ENCODE measurements at regions of chr4 and their contacts with region 1.

Region 1: DNA sequence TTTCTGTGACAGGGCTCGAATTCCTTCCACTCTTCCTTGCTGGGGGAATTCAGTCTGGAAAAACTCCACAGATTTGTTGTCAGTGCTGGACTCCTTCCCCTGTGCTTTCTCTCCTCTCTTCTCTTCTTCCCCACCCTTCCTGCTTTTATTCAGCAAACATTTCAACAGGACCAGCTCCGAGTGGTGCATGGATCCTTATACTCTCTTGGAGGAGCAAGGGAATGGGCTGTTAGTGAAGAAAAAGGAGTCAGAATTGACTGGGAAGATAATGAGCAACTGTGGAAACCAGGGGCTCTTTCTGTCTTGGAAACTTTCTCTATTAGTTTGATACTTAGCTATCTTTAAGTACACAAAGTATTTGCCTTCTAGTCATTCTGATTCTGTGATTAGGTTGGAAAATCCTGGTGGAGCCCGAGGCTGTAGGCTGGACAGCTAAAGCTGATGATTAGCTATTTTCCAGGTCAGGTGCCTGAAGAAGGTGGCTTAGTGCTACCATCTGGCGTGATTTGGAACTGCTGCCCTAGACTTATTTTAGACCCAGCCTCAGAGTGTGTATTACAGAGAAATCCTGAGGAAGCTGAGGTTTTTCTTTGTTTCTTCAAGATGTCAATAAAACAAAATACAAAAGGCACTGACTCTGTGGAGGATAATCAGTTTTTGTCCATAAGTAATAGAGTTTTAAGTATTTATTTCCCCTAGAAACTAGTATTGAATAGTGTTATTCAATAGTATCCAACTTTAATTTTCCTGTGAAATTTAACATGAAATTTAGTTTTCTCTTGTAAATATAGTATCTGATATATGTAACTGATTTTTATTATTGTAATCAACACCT is 38.4 kb downstream of the NAP1L5 start:
- DNase-seq: no peak
- H3K4me3 Mint-ChIP-seq: no peak overlapping the region
- H3K27ac Mint-ChIP-seq: no peak overlapping the region
- H3K4me1 Mint-ChIP-seq: peaks cover 10% of the 10 kb centered on the region
- H3K27me3 Mint-ChIP-seq: no peaks in the 10 kb centered on the region

Region 2: DNA sequence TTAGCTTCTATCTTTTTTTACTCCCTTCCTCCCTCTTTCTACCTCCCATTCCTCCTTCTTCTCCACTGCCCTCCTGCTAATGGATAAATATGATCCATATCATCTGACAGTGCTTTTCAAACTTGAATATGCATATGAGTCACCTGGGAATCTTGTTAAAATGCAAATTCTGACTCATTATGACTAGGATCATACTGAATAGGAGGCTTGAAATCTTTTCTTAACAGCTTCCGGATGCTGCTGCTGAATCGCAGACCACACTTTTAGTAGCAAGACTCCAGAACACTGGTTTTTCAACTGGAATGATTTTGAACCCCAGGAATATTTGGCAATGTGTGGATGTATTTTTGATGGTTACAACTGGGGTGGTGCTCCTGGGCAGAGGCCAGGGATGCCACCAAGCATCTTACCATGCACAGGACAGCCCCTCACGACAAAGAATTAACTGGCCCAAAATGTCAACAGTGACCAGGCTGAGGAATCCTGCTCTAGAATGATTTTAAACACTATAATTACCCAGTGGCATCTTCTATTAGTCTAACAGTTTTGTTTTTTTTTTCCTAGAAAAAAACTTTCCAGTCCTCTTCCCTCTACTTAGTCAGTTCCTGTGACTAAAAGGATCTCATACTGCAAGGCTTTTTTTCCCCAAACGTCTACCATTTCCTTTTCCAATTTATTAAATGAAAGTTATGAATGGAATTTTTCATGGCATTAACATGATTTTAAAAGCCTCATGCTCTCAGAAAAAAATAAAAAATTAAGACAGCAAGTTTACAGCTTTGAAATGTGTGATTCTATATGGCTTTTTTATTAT is 125.1 kb before region 1 on chr4:
- intact Hi-C with region 1: loop called (anchors 1 kb)
- DNase-seq: no peak
- H3K4me3 Mint-ChIP-seq: no peak overlapping the region
- H3K27ac Mint-ChIP-seq: no peak overlapping the region
- H3K4me1 Mint-ChIP-seq: peaks cover 6% of the 10 kb centered on the region
- H3K27me3 Mint-ChIP-seq: peaks cover 3% of the 10 kb centered on the region

Region 3: DNA sequence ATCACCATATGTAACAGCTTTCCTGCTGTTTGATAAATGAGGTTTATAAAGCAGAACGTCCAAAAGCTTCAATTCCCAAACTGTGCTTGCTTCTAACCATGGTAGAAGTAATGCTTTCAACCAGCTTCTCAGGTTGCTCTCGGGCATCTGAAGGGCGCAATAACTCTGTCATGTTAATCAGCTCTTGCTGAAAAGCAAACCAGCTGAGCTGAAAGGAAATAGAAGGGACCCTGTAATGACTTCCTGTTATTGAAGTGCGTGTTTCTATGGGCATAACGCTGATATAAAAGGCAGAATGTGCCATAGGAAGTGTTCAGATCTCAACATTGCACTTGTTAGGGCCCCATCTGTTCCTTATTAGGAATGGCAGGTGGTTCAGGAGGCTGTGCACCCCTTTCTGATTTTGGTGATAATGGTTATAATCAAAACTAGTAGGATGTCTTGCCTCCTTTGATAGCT is 45.8 kb before region 1 on chr4:
- intact Hi-C with region 1: no loop called
- DNase-seq: no peak
- H3K4me3 Mint-ChIP-seq: peak overlapping the region; percentile 19
- H3K27ac Mint-ChIP-seq: peak overlapping the region; percentile 54
- H3K4me1 Mint-ChIP-seq: peaks cover 48% of the 10 kb centered on the region
- H3K27me3 Mint-ChIP-seq: no peaks in the 10 kb centered on the region